Panc1 (cell line): ENCODE measurements at regions of chr5 and their contacts with region 1.

Region 1: DNA sequence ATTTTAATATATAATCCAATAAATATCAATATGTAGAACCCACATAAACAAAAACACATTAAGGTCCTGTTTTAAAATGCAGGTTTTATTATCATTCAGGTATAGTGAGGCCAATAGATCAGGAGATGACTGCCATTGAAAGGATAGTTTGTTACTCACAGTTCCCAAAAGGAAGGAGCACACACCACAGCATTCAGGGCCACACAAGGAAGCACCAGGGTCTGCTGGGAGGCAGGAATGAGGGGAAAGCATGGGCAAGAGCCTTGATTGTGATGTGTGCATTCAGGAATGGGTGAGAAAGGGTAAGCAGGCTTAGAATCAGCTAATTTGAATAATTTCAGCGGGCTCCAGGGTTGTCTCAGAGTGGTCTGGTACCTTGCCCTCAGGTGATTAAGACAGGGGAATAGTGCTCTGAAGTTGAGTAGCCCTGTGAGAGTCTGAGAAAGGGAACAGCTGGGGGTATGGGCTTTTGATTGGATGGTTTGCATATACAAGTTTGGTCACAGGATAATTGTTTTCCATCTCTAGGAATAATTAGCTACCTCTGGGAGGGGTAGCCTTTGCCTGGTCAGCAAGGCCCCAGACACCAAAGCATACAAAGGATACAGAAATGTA is 19.8 kb upstream of the OTULIN start:
- DNase-seq: no peak
- ATAC-seq: no peak
- H3K4me3 ChIP-seq: no peak overlapping the region
- H3K27ac ChIP-seq: no peak overlapping the region
- H3K4me1 ChIP-seq: no peaks in the 10 kb centered on the region
- H3K27me3 ChIP-seq: peaks cover 8% of the 10 kb centered on the region
- CTCF ChIP-seq: no peak

Region 2: GRCh38 chr5:14405267-14405666 is 239.5 kb before region 1 on chr5:
- CTCF ChIA-PET with region 1: interaction called, 4 read pairs
- POLR2A ChIA-PET with region 1: no interaction called
- in situ Hi-C with region 1: no loop called
- intact Hi-C with region 1: loop called (anchors 10 kb)
- DNase-seq: no peak
- ATAC-seq: peak; percentile 50
- H3K4me3 ChIP-seq: no peak overlapping the region
- H3K27ac ChIP-seq: no peak overlapping the region
- H3K4me1 ChIP-seq: no peaks in the 10 kb centered on the region
- H3K27me3 ChIP-seq: no peaks in the 10 kb centered on the region
- CTCF ChIP-seq: peak; percentile 73; the same call in 1 of the 2 replicates

Region 3: GRCh38 chr5:14513266-14513665 is 131.5 kb before region 1 on chr5:
- CTCF ChIA-PET with region 1: no interaction called
- POLR2A ChIA-PET with region 1: no interaction called
- in situ Hi-C with region 1: no loop called
- intact Hi-C with region 1: loop called (anchors 2 kb)
- DNase-seq: no peak
- ATAC-seq: peak; percentile 53
- H3K4me3 ChIP-seq: no peak overlapping the region
- H3K27ac ChIP-seq: no peak overlapping the region
- H3K4me1 ChIP-seq: no peaks in the 10 kb centered on the region
- H3K27me3 ChIP-seq: no peaks in the 10 kb centered on the region
- CTCF ChIP-seq: no peak

Region 4: DNA sequence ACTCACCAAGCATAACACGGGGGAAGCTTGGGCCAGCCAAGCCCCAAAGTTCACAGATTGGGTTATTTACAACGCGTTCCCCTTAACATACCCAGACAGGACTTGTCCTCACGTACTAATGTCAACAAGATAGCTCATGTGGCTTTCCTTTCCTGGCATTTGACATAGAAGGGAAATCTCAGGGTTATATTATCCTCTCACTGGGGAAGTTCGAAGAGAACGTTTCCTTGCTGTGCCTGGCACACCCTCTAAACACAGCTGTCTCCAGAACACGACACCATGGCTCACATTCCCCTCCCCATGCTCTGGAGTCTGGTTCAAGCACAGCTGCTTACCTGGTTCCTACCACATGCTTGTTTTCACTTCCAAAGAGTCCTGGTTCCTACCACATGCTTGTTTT is 110.0 kb before region 1 on chr5:
- CTCF ChIA-PET with region 1: no interaction called
- POLR2A ChIA-PET with region 1: interaction called, 18 read pairs
- in situ Hi-C with region 1: no loop called
- intact Hi-C with region 1: no loop called
- DNase-seq: no peak
- ATAC-seq: 0 out of 2 replicates have a peak, but pooled peaks have one; percentile 26
- H3K4me3 ChIP-seq: no peak overlapping the region
- H3K27ac ChIP-seq: no peak overlapping the region
- H3K4me1 ChIP-seq: no peaks in the 10 kb centered on the region
- H3K27me3 ChIP-seq: no peaks in the 10 kb centered on the region
- CTCF ChIP-seq: no peak

Region 5: GRCh38 chr5:14574891-14575496 is 69.7 kb before region 1 on chr5:
- CTCF ChIA-PET with region 1: no interaction called
- POLR2A ChIA-PET with region 1: no interaction called
- in situ Hi-C with region 1: no loop called
- intact Hi-C with region 1: no loop called
- DNase-seq: peak; percentile 27
- ATAC-seq: no peak
- H3K4me3 ChIP-seq: no peak overlapping the region
- H3K27ac ChIP-seq: no peak overlapping the region
- H3K4me1 ChIP-seq: no peaks in the 10 kb centered on the region
- H3K27me3 ChIP-seq: peaks cover 2% of the 10 kb centered on the region; the same call in 1 of the 2 replicates
- CTCF ChIP-seq: no peak